CD8-positive, alpha-beta T cell (primary cell): ENCODE measurements at regions of chr9 and their contacts with region 1.

Region 1: DNA sequence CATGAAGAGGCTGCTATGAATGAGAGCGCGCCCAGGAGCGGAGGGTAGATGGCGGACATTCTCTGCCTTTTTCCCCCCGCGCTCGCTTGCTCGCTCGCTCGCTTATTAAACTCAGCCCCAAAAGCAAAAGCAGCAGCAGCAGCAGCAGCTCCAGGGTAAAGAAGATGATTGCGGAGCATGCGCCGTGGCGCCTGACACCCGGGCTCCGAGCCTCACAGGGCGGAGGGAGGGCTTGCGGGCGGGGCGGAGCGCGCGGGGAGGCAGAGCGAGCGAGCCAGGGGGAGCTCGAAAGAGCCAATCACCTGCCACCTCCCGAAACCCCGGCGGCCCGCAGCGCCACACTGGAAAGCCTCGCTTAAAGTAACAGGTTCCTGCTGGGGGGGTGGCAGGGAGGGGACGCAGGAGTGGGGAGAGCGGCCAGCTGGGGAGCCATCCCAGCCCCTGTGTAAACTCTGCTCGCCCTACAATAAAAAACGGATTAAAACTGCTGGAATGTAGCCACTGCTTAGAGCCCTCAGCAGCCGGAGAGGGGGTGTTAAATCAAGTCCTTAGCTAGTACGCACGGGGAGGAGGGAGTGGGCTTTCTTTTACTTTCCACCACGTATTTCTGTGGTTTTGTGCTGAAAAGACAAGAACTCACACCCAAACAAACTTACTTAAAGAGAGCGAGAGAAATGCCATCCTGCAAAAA is at the start of gene MLLT3:
- DNase-seq: peak; percentile 95 to 98 (median 97)
- ATAC-seq: peak; percentile 74
- H3K4me3 ChIP-seq: peak within 1 kb of the TSS; percentile 97 to 98
- H3K4me3 Mint-ChIP-seq: peak within 1 kb of the TSS; percentile 98
- H3K27ac ChIP-seq: peak within 1 kb of the TSS; percentile 75 to 88
- H3K27ac Mint-ChIP-seq: peak within 1 kb of the TSS; percentile 99
- H3K4me1 ChIP-seq: peaks cover 41% of the 10 kb centered on the region
- H3K4me1 Mint-ChIP-seq: peaks cover 46% of the 10 kb centered on the region
- H3K27me3 ChIP-seq: no peaks in the 10 kb centered on the region
- H3K27me3 Mint-ChIP-seq: no peaks in the 10 kb centered on the region
- CTCF ChIP-seq: no peak
- total RNA-seq, gene MLLT3: 40.3 to 44.5 TPM

Region 2: DNA sequence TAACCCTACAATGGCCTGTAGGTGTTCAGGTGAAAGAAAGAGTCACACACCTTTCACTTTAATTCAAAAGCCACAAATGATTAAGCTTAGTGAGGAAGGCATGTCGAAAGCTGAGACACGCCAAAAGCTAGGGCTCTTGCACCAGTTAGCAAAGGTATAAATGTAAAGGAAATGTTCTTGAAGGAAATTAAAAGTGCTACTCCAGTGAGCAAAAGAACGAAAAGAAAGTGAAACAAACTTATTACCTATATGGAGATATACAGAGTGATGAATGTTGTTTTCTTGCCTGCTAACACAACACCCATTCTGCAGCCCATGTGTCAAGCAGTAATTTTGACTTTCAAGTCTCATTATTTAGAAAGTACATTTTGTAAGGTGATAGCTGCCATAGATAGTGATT is 579.4 kb before region 1 on chr9:
- CTCF ChIA-PET with region 1: no interaction called
- POLR2A ChIA-PET with region 1: no interaction called
- intact Hi-C with region 1: loop called in 1 of 2 experiments (anchors 5 kb)
- DNase-seq: peak in 2 of 9 experiments; percentile 15 to 44
- ATAC-seq: peak; percentile 69
- H3K4me3 ChIP-seq: peak overlapping the region; percentile 33 to 44
- H3K4me3 Mint-ChIP-seq: peak overlapping the region; percentile 80
- H3K27ac ChIP-seq: peak overlapping the region; percentile 4 to 74
- H3K27ac Mint-ChIP-seq: peak overlapping the region; percentile 84
- H3K4me1 ChIP-seq: peaks cover 22% of the 10 kb centered on the region
- H3K4me1 Mint-ChIP-seq: peaks cover 28% of the 10 kb centered on the region
- H3K27me3 ChIP-seq: no peaks in the 10 kb centered on the region
- H3K27me3 Mint-ChIP-seq: no peaks in the 10 kb centered on the region
- CTCF ChIP-seq: no peak

Region 3: DNA sequence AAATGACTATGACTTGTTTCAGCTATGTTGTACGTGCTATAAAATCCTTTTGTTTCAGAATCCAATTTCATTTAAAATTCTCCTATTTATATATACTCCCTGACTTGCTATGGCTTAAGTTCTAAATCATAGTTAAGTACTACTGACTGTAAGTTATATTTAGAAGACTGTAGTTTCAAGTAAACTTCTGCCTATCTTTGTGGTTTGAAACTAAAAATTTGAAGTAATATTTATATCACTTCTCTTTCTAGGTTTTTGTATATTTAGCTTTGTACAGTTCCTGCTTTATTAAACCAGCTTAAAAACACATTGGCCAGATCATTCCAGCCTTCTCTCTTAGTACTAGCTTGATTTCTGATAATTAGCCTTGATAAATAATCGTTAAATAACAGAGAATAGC is 196.5 kb before region 1 on chr9:
- CTCF ChIA-PET with region 1: no interaction called
- POLR2A ChIA-PET with region 1: no interaction called
- intact Hi-C with region 1: loop called in 1 of 2 experiments (anchors 5 kb)
- DNase-seq: no peak
- ATAC-seq: no peak
- H3K4me3 ChIP-seq: no peak overlapping the region
- H3K4me3 Mint-ChIP-seq: no peak overlapping the region
- H3K27ac ChIP-seq: no peak overlapping the region
- H3K27ac Mint-ChIP-seq: no peak overlapping the region
- H3K4me1 ChIP-seq: no peaks in the 10 kb centered on the region
- H3K4me1 Mint-ChIP-seq: peaks cover 32% of the 10 kb centered on the region
- H3K27me3 ChIP-seq: no peaks in the 10 kb centered on the region
- H3K27me3 Mint-ChIP-seq: no peaks in the 10 kb centered on the region
- CTCF ChIP-seq: no peak

Region 4: GRCh38 chr9:20604562-20604961 is 17.9 kb before region 1 on chr9:
- CTCF ChIA-PET with region 1: interaction called, 7 read pairs
- POLR2A ChIA-PET with region 1: interaction called, 11 read pairs
- intact Hi-C with region 1: loop called in 1 of 2 experiments (anchors 1 kb)
- DNase-seq: peak in 2 of 9 experiments; percentile 13 to 38
- ATAC-seq: peak; percentile 59
- H3K4me3 ChIP-seq: no peak overlapping the region
- H3K4me3 Mint-ChIP-seq: peak overlapping the region; percentile 55
- H3K27ac ChIP-seq: no peak overlapping the region
- H3K27ac Mint-ChIP-seq: peak overlapping the region; percentile 53
- H3K4me1 ChIP-seq: peaks cover 35% of the 10 kb centered on the region
- H3K4me1 Mint-ChIP-seq: peaks cover 83% of the 10 kb centered on the region
- H3K27me3 ChIP-seq: no peaks in the 10 kb centered on the region
- H3K27me3 Mint-ChIP-seq: no peaks in the 10 kb centered on the region
- CTCF ChIP-seq: no peak

Region 5: DNA sequence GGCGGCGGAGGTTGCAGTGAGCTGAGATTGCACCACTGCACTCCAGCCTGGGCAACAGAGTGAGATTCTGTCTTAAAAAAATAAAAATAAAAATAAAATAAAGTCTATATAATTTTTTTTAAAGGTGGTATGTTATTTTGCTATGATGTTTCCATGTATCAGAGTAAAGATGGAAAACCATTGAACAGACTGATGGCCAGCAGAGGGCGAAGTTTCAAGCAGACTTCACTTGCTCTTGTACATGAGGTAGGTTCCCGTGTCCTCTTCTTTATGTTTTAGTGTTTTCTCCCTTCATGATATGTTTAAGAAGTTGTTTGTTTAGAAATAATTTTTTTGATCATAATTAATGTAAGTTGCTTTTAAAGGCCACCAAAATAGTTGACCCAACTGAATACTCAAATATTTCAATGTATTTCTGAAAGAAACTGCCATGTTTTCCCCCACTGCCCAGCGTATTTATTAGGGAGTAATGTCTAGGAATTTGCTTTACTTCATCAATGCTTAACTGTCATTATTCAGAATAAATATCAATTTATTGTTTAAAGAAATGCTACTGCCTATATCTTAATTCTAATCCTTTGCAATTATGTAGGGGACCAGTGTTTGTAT is 262.6 kb after region 1 on chr9:
- CTCF ChIA-PET with region 1: interaction called, 6 read pairs
- POLR2A ChIA-PET with region 1: interaction called, 3 read pairs
- intact Hi-C with region 1: loop called (anchors 1 to 2 kb)
- DNase-seq: peak; percentile 37 to 72 (median 58)
- ATAC-seq: peak; percentile 44
- H3K4me3 ChIP-seq: no peak overlapping the region
- H3K4me3 Mint-ChIP-seq: no peak overlapping the region
- H3K27ac ChIP-seq: no peak overlapping the region
- H3K27ac Mint-ChIP-seq: no peak overlapping the region
- H3K4me1 ChIP-seq: no peaks in the 10 kb centered on the region
- H3K4me1 Mint-ChIP-seq: no peaks in the 10 kb centered on the region
- H3K27me3 ChIP-seq: no peaks in the 10 kb centered on the region
- H3K27me3 Mint-ChIP-seq: no peaks in the 10 kb centered on the region
- CTCF ChIP-seq: peak; percentile 76

Region 6: GRCh38 chr9:21334701-21335632 is 712.5 kb after region 1 on chr9 and contains the start of gene KLHL9:
- CTCF ChIA-PET with region 1: no interaction called
- POLR2A ChIA-PET with region 1: no interaction called
- intact Hi-C with region 1: loop called (anchors 5 to 10 kb)
- DNase-seq: peak; percentile 64 to 94 (median 86)
- ATAC-seq: peak; percentile 84
- H3K4me3 ChIP-seq: peak within 1 kb of the TSS; percentile 67 to 88
- H3K4me3 Mint-ChIP-seq: peak within 1 kb of the TSS; percentile 92
- H3K27ac ChIP-seq: peak within 1 kb of the TSS; percentile 93 to 96
- H3K27ac Mint-ChIP-seq: peak within 1 kb of the TSS; percentile 96
- H3K4me1 ChIP-seq: peaks cover 45% of the 10 kb centered on the region
- H3K4me1 Mint-ChIP-seq: peaks cover 56% of the 10 kb centered on the region
- H3K27me3 ChIP-seq: no peaks in the 10 kb centered on the region
- H3K27me3 Mint-ChIP-seq: no peaks in the 10 kb centered on the region
- CTCF ChIP-seq: no peak
- total RNA-seq, gene KLHL9: 11.2 to 11.4 TPM